Naive thymus-derived CD4-positive, alpha-beta T cell (primary cell): ENCODE measurements at regions of chr19 and their contacts with region 1.

Region 1: DNA sequence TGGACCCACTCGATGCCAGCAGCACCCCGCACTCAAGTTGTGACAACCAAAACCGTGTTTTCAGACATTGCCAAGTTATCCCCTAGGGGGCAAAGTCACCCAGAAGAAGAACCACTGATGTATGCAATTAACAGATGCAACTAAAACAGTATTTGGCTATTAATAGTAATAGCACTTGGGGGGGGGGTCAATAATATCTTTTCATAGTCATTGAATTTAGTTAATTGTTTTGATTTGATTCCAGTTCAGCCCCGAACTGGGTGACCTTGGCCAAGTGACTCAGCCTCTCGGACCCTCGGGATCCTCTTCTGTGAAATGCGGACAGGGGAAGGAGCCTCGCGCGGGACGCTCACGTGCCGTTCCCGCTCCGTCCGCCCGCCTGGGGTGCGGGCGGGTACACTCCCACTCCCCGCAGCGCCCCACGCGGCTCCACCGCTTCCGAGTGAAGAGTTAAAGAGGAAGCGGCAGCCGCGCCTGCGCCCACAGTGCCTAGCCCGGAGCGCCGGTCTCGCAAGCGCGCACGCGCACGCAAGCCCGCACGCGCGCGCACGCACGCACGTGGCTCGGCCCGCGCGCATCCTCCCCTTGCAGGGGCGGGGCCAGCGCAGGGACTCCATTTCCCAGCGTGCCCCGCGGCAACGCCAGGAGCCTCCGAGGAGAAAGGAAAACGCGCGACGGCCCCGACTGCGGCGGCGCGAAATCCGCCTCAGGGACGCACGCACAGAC is 449 bp upstream of the DAZAP1 start:
- DNase-seq: peak; percentile 99 to 100 (median 100)
- ATAC-seq: peak; percentile 93
- H3K4me3 ChIP-seq: peak overlapping the region; percentile 40
- H3K4me3 Mint-ChIP-seq: peak overlapping the region; percentile 72 to 89 (median 80)
- H3K27ac ChIP-seq: peak overlapping the region; percentile 98
- H3K27ac Mint-ChIP-seq: peak overlapping the region; percentile 50 to 93 (median 85)
- H3K4me1 ChIP-seq: peaks cover 38 to 40% of the 10 kb centered on the region in 2 donors
- H3K4me1 Mint-ChIP-seq: peaks cover 33 to 53% (median 45%) of the 10 kb centered on the region in 7 donors
- H3K27me3 ChIP-seq: no peaks in the 10 kb centered on the region
- H3K27me3 Mint-ChIP-seq: peaks cover 0 to 9% (median 0%) of the 10 kb centered on the region in 5 donors

Region 2: DNA sequence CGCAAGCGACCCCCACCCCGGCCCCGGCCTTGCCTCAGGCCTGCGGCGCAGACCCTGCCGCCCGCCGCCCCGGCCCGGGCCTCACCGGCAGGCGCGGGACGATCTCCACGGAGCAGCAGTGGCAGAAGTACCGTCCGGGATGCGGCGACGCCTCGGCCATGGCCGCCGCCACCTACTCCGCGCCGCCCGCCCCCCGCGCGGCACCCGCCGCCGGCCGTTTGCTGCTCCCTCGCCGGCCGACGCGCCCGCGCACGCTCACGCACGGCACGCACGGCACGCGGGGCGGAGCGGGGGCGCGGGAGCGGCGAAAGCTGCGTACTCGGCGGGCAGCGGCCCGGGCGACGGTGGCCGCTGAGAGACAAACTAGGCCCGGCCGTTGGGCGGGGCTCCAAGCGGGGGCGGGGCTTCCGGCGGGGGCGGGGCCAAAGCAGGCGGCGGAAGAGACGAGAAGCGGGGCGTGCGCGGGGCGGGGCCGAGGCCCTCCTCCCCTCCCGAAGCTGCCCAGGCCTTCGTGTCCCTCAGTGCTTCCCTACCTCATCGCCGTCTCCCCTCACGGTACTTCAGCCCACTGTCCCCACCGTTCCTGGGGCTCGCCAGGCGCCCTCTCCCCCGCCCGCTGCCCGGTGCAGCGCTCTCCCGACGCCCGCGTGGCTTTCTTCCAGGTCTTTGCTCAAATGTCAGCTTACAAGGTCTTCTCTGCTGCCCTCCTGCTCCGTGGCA is 743.8 kb before region 1 on chr19 and contains the start of gene RNF126:
- CTCF ChIA-PET with region 1: no interaction called
- POLR2A ChIA-PET with region 1: no interaction called
- intact Hi-C with region 1: loop called in 1 of 2 experiments (anchors 10 kb)
- DNase-seq: peak; percentile 83 to 92 (median 88)
- ATAC-seq: peak; percentile 78
- H3K4me3 ChIP-seq: peak within 1 kb of the TSS; percentile 92
- H3K4me3 Mint-ChIP-seq: peak within 1 kb of the TSS; percentile 95 to 99 (median 98)
- H3K27ac ChIP-seq: peak within 1 kb of the TSS; percentile 96
- H3K27ac Mint-ChIP-seq: peak within 1 kb of the TSS; percentile 93 to 98 (median 97)
- H3K4me1 ChIP-seq: peaks cover 27 to 30% of the 10 kb centered on the region in 2 donors
- H3K4me1 Mint-ChIP-seq: peaks cover 20 to 40% (median 32%) of the 10 kb centered on the region in 7 donors
- H3K27me3 ChIP-seq: no peaks in the 10 kb centered on the region
- H3K27me3 Mint-ChIP-seq: peaks cover 0 to 2% (median 0%) of the 10 kb centered on the region in 5 donors
- total RNA-seq, gene RNF126: 75.1 to 110 (median 101) TPM

Region 3: DNA sequence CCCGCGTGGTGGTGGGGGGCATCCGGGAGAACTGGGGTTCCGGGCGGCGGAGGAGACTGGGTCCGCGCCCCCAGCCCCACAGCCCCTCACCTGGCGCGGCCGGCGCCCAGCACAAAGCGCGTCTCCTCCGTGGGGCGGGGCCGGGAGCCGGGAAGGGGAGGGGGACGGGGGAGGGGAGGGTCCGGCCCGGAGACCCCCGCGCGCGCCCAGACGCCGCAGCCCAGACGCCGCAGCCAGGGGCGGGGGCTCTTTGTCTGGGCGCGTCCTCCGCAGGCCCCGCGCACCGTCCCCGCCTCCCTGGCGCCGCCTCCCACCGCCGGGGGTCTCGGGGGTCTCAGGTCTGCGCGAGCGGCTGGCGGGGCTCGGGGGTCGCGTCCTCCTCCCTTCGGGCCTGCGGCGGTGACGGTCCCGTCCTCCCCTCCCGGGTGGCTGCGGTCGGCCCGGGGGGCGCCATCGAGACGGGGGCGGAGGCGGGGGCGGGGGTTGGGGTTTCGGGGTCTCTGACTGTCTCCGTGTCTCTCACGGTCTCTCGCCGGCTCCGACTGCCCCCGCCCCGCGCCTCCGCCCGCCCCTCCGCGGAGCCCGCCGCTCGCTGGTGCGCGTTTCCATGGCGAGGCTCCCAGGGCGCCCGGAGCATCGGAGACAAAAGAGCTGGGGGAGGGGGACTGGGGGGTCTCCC is 585.0 kb before region 1 on chr19 and contains the start of gene PLPPR3:
- CTCF ChIA-PET with region 1: no interaction called
- POLR2A ChIA-PET with region 1: no interaction called
- intact Hi-C with region 1: no loop called
- DNase-seq: peak in 1 of 9 donors; percentile 7
- ATAC-seq: no peak
- H3K4me3 ChIP-seq: no peak within 1 kb of the TSS
- H3K4me3 Mint-ChIP-seq: peak within 1 kb of the TSS in 8 of 10 donors; percentile 21 to 66 (median 38)
- H3K27ac ChIP-seq: no peak within 1 kb of the TSS
- H3K27ac Mint-ChIP-seq: no peak within 1 kb of the TSS
- H3K4me1 ChIP-seq: no peaks in the 10 kb centered on the region
- H3K4me1 Mint-ChIP-seq: peaks cover 0 to 6% (median 0%) of the 10 kb centered on the region in 7 donors
- H3K27me3 ChIP-seq: no peaks in the 10 kb centered on the region
- H3K27me3 Mint-ChIP-seq: peaks cover 8 to 28% (median 21%) of the 10 kb centered on the region in 5 donors
- total RNA-seq, gene PLPPR3: not detected

Region 4: GRCh38 chr19:1020868-1021425 is 386.0 kb before region 1 on chr19 and contains the start of gene TMEM259:
- CTCF ChIA-PET with region 1: no interaction called
- POLR2A ChIA-PET with region 1: no interaction called
- intact Hi-C with region 1: loop called in 1 of 2 experiments (anchors 10 kb)
- DNase-seq: peak; percentile 92 to 99 (median 97)
- ATAC-seq: peak; percentile 94
- H3K4me3 ChIP-seq: peak within 1 kb of the TSS; percentile 79
- H3K4me3 Mint-ChIP-seq: peak within 1 kb of the TSS; percentile 85 to 98 (median 92)
- H3K27ac ChIP-seq: peak within 1 kb of the TSS; percentile 91
- H3K27ac Mint-ChIP-seq: peak within 1 kb of the TSS; percentile 99 to 100 (median 100)
- H3K4me1 ChIP-seq: peaks cover 26 to 44% of the 10 kb centered on the region in 2 donors
- H3K4me1 Mint-ChIP-seq: peaks cover 9 to 50% (median 33%) of the 10 kb centered on the region in 7 donors
- H3K27me3 ChIP-seq: no peaks in the 10 kb centered on the region
- H3K27me3 Mint-ChIP-seq: peaks cover 0 to 7% (median 0%) of the 10 kb centered on the region in 5 donors
- total RNA-seq, gene TMEM259: 189 to 347 (median 311) TPM

Region 5: GRCh38 chr19:1275260-1275975 is 131.5 kb before region 1 on chr19 and contains the start of gene FAM174C:
- CTCF ChIA-PET with region 1: no interaction called
- POLR2A ChIA-PET with region 1: interaction called, 4 read pairs
- intact Hi-C with region 1: loop called (anchors 1 kb)
- DNase-seq: peak; percentile 90 to 97 (median 96)
- ATAC-seq: peak; percentile 90
- H3K4me3 ChIP-seq: peak within 1 kb of the TSS; percentile 75
- H3K4me3 Mint-ChIP-seq: peak within 1 kb of the TSS; percentile 79 to 93 (median 88)
- H3K27ac ChIP-seq: peak within 1 kb of the TSS; percentile 93
- H3K27ac Mint-ChIP-seq: peak within 1 kb of the TSS; percentile 62 to 98 (median 95)
- H3K4me1 ChIP-seq: peaks cover 46 to 60% of the 10 kb centered on the region in 2 donors
- H3K4me1 Mint-ChIP-seq: peaks cover 40 to 60% (median 48%) of the 10 kb centered on the region in 7 donors
- H3K27me3 ChIP-seq: no peaks in the 10 kb centered on the region
- H3K27me3 Mint-ChIP-seq: no peaks in the 10 kb centered on the region
- total RNA-seq, gene FAM174C: 31.7 to 57.3 (median 47.7) TPM

Region 6: GRCh38 chr19:1438035-1438932 is 31.3 kb after region 1 on chr19 and contains the start of gene RPS15:
- CTCF ChIA-PET with region 1: no interaction called
- POLR2A ChIA-PET with region 1: interaction called, 6 read pairs
- intact Hi-C with region 1: loop called (anchors 1 kb)
- DNase-seq: peak; percentile 92 to 98 (median 96)
- ATAC-seq: peak; percentile 97
- H3K4me3 ChIP-seq: peak within 1 kb of the TSS; percentile 82
- H3K4me3 Mint-ChIP-seq: peak within 1 kb of the TSS; percentile 87 to 99 (median 98)
- H3K27ac ChIP-seq: peak within 1 kb of the TSS; percentile 92
- H3K27ac Mint-ChIP-seq: peak within 1 kb of the TSS; percentile 96 to 100 (median 99)
- H3K4me1 ChIP-seq: peaks cover 8 to 11% of the 10 kb centered on the region in 2 donors
- H3K4me1 Mint-ChIP-seq: peaks cover 9 to 34% (median 15%) of the 10 kb centered on the region in 7 donors
- H3K27me3 ChIP-seq: no peaks in the 10 kb centered on the region
- H3K27me3 Mint-ChIP-seq: no peaks in the 10 kb centered on the region
- total RNA-seq, gene RPS15: 1,300 to 2,097 (median 2,012) TPM

Region 7: GRCh38 chr19:1507763-1508509 is 101.0 kb after region 1 on chr19:
- CTCF ChIA-PET with region 1: no interaction called
- POLR2A ChIA-PET with region 1: no interaction called
- intact Hi-C with region 1: loop called in 1 of 2 experiments (anchors 1 kb)
- DNase-seq: peak; percentile 76 to 96 (median 94)
- ATAC-seq: peak; percentile 97
- H3K4me3 ChIP-seq: peak overlapping the region; percentile 48
- H3K4me3 Mint-ChIP-seq: peak overlapping the region; percentile 75 to 92 (median 86)
- H3K27ac ChIP-seq: peak overlapping the region; percentile 79
- H3K27ac Mint-ChIP-seq: peak overlapping the region; percentile 87 to 96 (median 92)
- H3K4me1 ChIP-seq: peaks cover 4 to 18% of the 10 kb centered on the region in 2 donors
- H3K4me1 Mint-ChIP-seq: peaks cover 7 to 41% (median 27%) of the 10 kb centered on the region in 7 donors
- H3K27me3 ChIP-seq: peaks cover 0 to 2% of the 10 kb centered on the region in 2 donors
- H3K27me3 Mint-ChIP-seq: peaks cover 0 to 41% (median 2%) of the 10 kb centered on the region in 5 donors

Region 8: DNA sequence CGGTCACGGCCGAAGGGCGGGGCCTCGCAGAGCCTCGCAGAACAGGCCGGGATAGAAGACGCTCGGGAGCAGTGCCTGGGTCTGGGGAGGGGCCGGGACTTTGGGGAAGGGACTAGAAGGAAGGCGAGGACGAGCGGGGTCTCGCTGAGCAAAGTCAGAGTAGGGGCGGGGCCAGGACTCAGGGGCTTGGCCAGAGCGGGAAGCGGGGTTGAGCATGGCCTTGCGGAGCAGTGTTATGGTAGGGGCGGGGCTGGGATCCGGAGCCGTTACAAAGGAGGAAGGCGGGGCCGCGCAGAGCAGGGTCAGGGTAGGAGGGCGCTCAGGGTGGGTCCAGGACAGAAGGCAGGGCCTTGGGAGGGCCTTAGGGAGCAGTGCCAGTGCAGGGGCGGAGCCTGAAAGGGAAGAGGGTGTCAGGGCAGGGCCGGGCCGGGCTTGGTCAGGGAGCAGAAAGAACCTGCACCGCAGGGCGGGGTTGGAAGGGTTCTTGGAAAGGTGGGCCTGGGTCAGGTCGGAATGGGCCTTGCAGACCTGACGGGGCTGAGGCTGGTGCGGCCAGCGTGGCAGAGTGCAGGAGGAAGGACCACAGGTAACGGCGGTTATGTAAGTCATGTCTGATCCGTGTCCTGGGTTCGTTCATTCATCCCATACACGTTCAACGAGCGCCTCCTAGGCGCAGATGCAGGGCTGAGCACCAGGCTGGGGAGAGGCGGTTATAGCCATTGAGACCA is 405.7 kb after region 1 on chr19:
- CTCF ChIA-PET with region 1: no interaction called
- POLR2A ChIA-PET with region 1: no interaction called
- intact Hi-C with region 1: loop called in 1 of 2 experiments (anchors 1 kb)
- DNase-seq: peak; percentile 70 to 88 (median 84)
- ATAC-seq: peak; percentile 85
- H3K4me3 ChIP-seq: peak overlapping the region; percentile 65
- H3K4me3 Mint-ChIP-seq: peak overlapping the region; percentile 93 to 99 (median 96)
- H3K27ac ChIP-seq: peak overlapping the region; percentile 63
- H3K27ac Mint-ChIP-seq: peak overlapping the region; percentile 82 to 97 (median 92)
- H3K4me1 ChIP-seq: peaks cover 0 to 8% of the 10 kb centered on the region in 2 donors
- H3K4me1 Mint-ChIP-seq: peaks cover 9 to 19% (median 11%) of the 10 kb centered on the region in 7 donors
- H3K27me3 ChIP-seq: no peaks in the 10 kb centered on the region
- H3K27me3 Mint-ChIP-seq: no peaks in the 10 kb centered on the region